ENCODE measurements at regions of chr13 and their contacts with region 1.

Region 1: DNA sequence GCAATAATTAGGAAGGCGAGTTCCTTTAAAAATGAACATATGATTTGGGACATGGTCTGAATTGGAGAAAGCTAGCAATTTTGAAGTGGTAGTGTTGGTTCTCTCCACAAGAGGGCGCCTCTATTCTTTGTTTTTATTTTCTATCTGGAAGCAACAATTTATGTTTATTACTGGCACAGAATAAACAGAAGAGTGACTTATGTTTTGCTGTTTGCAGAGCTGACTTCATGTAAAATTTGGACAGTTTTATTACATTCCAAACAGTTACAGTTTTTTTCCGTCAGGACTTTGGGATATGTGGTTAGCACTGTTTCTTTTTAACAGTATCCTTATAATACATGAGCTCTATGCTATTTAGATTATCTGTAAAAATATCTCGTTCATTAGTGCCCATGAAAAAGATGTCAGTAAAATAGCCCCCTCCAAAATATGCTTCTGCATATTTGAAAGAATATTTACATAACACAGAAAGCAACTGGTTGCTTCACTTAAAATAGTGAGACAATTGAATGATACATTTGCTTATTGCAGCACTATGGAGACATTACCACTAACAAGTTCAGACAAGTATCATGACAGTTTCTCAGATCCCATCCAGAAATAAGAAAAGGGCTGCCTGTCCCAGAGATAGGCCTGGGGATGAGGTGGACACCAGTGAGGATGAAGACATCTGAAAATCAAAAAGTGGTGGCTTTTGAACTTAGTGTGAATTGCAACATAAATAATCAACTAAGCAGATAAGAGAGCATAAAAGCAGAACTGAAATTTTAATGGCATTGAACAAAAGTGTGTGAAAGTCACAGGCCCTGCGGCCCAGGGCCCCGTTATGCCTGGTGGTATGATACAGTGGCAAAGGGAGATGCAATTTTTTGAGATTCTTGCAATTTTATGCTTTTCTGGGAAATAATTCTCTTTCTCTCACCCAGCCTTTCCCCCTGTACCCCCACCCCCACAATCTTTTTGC is 32.3 kb upstream of the FGF9 start:
- DNase-seq: peak in 4 of 5 donors; percentile 37 to 49 (median 42)
- H3K4me3 ChIP-seq: no peak overlapping the region
- H3K4me3 Mint-ChIP-seq: no peak overlapping the region
- H3K27ac ChIP-seq: no peak overlapping the region
- H3K27ac Mint-ChIP-seq: peak overlapping the region in 1 of 7 donors; percentile 37
- H3K4me1 ChIP-seq: no peaks in the 10 kb centered on the region
- H3K4me1 Mint-ChIP-seq: peaks cover 0 to 5% (median 0%) of the 10 kb centered on the region in 4 donors
- H3K27me3 ChIP-seq: no peaks in the 10 kb centered on the region
- H3K27me3 Mint-ChIP-seq: peaks cover 2 to 7% of the 10 kb centered on the region in 2 donors

Region 2: GRCh38 chr13:21603531-21604448 is 34.8 kb before region 1 on chr13 and contains the start of gene MICU2:
- CTCF ChIA-PET with region 1: interaction called, 18 read pairs
- POLR2A ChIA-PET with region 1: interaction called, 9 read pairs
- intact Hi-C with region 1: no loop called
- DNase-seq: peak; percentile 96 to 97 (median 97)
- H3K4me3 ChIP-seq: peak within 1 kb of the TSS; percentile 78 to 83
- H3K4me3 Mint-ChIP-seq: peak within 1 kb of the TSS; percentile 86 to 97 (median 89)
- H3K27ac ChIP-seq: peak within 1 kb of the TSS; percentile 85
- H3K27ac Mint-ChIP-seq: peak within 1 kb of the TSS; percentile 90 to 97 (median 95)
- H3K4me1 ChIP-seq: peaks cover 36% of the 10 kb centered on the region
- H3K4me1 Mint-ChIP-seq: peaks cover 28 to 58% (median 36%) of the 10 kb centered on the region in 4 donors
- H3K27me3 ChIP-seq: no peaks in the 10 kb centered on the region
- H3K27me3 Mint-ChIP-seq: peaks cover 4% of the 10 kb centered on the region in 2 donors
- total RNA-seq, gene MICU2: 46.0 to 50.3 TPM

Region 3: GRCh38 chr13:21670883-21671619 is 32.5 kb after region 1 on chr13 and contains the start of gene FGF9:
- CTCF ChIA-PET with region 1: interaction called, 86 read pairs
- POLR2A ChIA-PET with region 1: interaction called, 15 read pairs
- intact Hi-C with region 1: loop called (anchors 1 kb)
- DNase-seq: peak; percentile 83 to 89 (median 87)
- H3K4me3 ChIP-seq: peak within 1 kb of the TSS; percentile 69 to 86
- H3K4me3 Mint-ChIP-seq: peak within 1 kb of the TSS; percentile 89 to 98 (median 92)
- H3K27ac ChIP-seq: peak within 1 kb of the TSS; percentile 19
- H3K27ac Mint-ChIP-seq: peak within 1 kb of the TSS; percentile 65 to 93 (median 89)
- H3K4me1 ChIP-seq: peaks cover 45% of the 10 kb centered on the region
- H3K4me1 Mint-ChIP-seq: peaks cover 30 to 58% (median 40%) of the 10 kb centered on the region in 4 donors
- H3K27me3 ChIP-seq: peaks cover 11% of the 10 kb centered on the region
- H3K27me3 Mint-ChIP-seq: peaks cover 6 to 7% of the 10 kb centered on the region in 2 donors
- total RNA-seq, gene FGF9: 6.5 to 7.3 TPM

Region 4: GRCh38 chr13:21849323-21849722 is 210.7 kb after region 1 on chr13:
- CTCF ChIA-PET with region 1: interaction called, 7 read pairs
- POLR2A ChIA-PET with region 1: no interaction called
- intact Hi-C with region 1: loop called (anchors 2 kb)
- DNase-seq: peak in 4 of 5 donors; percentile 25 to 32 (median 29)
- H3K4me3 ChIP-seq: no peak overlapping the region
- H3K4me3 Mint-ChIP-seq: no peak overlapping the region
- H3K27ac ChIP-seq: no peak overlapping the region
- H3K27ac Mint-ChIP-seq: no peak overlapping the region
- H3K4me1 ChIP-seq: no peaks in the 10 kb centered on the region
- H3K4me1 Mint-ChIP-seq: peaks cover 0 to 6% (median 5%) of the 10 kb centered on the region in 4 donors
- H3K27me3 ChIP-seq: no peaks in the 10 kb centered on the region
- H3K27me3 Mint-ChIP-seq: peaks cover 0 to 6% of the 10 kb centered on the region in 2 donors

Region 5: DNA sequence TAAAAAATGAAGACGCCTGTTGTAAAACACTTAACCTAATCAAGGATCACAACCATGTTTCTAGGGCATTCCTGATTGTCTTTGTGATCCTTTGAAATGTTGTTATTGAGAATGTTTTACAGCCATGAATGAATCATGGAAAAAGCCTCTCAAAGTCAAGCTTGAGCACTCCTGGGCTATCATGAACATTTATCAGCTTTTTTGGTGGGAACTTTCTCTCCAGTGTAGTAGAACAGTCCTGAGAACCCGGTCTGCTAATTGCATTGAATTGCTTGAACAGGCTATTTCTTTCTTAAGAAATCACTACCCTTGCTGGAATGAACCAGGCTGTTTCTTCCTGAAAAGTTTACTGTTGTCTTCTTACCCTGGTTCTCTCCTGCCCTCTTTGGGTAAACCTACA is 548.7 kb after region 1 on chr13:
- CTCF ChIA-PET with region 1: interaction called, 17 read pairs
- POLR2A ChIA-PET with region 1: no interaction called
- intact Hi-C with region 1: loop called (anchors 1 kb)
- DNase-seq: peak in 2 of 5 donors; percentile 2 to 3
- H3K4me3 ChIP-seq: no peak overlapping the region
- H3K4me3 Mint-ChIP-seq: no peak overlapping the region
- H3K27ac ChIP-seq: no peak overlapping the region
- H3K27ac Mint-ChIP-seq: peak overlapping the region in 1 of 7 donors; percentile 15
- H3K4me1 ChIP-seq: peaks cover 5% of the 10 kb centered on the region
- H3K4me1 Mint-ChIP-seq: peaks cover 4 to 10% (median 5%) of the 10 kb centered on the region in 4 donors
- H3K27me3 ChIP-seq: no peaks in the 10 kb centered on the region
- H3K27me3 Mint-ChIP-seq: no peaks in the 10 kb centered on the region

Region 6: DNA sequence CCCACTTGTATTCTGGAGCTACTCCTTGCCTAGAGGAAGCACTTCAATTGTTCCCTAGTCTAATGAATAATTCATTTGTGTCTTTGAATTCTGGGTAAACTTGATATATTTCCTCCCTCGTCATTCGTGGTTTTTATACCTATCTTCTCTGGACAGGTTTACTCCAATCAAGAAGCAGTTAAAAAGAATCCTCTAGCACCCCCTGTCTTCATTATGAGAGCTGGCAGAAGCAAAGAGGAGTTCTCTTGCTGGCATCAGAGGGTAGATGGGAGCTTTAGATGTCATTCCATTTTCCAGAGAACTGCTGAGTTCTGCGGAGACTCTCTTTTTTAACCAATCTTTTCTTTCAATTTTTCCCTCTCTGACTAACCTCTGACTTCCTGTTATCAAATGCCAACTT is 659.9 kb after region 1 on chr13:
- CTCF ChIA-PET with region 1: interaction called, 9 read pairs
- POLR2A ChIA-PET with region 1: no interaction called
- intact Hi-C with region 1: loop called (anchors 1 kb)
- DNase-seq: peak in 1 of 5 donors; percentile 10
- H3K4me3 ChIP-seq: no peak overlapping the region
- H3K4me3 Mint-ChIP-seq: no peak overlapping the region
- H3K27ac ChIP-seq: no peak overlapping the region
- H3K27ac Mint-ChIP-seq: no peak overlapping the region
- H3K4me1 ChIP-seq: no peaks in the 10 kb centered on the region
- H3K4me1 Mint-ChIP-seq: peaks cover 0 to 2% (median under 1%) of the 10 kb centered on the region in 4 donors
- H3K27me3 ChIP-seq: no peaks in the 10 kb centered on the region
- H3K27me3 Mint-ChIP-seq: peaks cover under 1 to 5% of the 10 kb centered on the region in 2 donors

Measured in CD4-positive, alpha-beta memory T cell (primary cell).